ENCODE measurements at regions of chr1 and their contacts with region 1.

Region 1: DNA sequence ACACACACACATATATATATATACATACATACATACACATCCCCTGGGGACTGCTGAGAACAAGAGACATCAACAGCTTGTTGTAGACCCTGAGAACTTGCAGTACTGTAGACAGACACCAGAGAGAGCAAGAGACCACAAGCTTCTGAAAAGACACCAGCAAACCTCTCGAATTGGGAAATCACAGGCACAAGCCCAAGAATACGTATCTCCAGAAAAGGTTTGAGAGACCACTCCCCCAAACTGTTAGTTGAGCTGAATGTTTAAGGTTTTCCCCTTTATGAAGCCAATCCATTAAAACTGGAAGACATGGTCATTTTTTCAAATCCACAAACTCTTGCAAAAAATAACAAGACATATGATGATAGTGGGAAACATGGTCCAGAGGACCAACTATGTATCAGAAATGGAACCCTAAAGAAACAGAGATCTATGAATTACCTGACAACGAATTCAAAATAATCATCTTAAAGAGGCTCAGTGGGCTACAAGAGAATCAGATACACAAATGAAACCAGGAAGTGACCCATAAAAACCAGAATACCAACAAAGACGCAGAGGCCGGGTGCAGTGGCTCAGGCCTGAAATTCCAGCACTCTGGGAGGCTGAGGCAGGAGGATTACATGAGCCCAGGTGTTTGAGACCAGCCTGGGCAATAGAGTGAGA is 45.1 kb downstream of the SLC2A1 start:
- H3K4me3 ChIP-seq: no peak overlapping the region
- H3K27ac ChIP-seq: no peak overlapping the region
- H3K4me1 ChIP-seq: no peaks in the 10 kb centered on the region
- CTCF ChIP-seq: peak; percentile 39; the same call in 1 of the 2 replicates

Region 2: GRCh38 chr1:42380586-42381279 is 532.8 kb before region 1 on chr1 and contains the start of gene RIMKLA:
- CTCF ChIA-PET with region 1: no interaction called
- POLR2A ChIA-PET with region 1: no interaction called
- H3K4me3 ChIP-seq: peak within 1 kb of the TSS; percentile 66
- H3K27ac ChIP-seq: peak within 1 kb of the TSS; percentile 57; the same call in 1 of the 2 replicates
- H3K4me1 ChIP-seq: peaks cover 4% of the 10 kb centered on the region; the same call in 1 of the 2 replicates
- CTCF ChIP-seq: no peak; the same call in 1 of the 2 replicates

Region 3: DNA sequence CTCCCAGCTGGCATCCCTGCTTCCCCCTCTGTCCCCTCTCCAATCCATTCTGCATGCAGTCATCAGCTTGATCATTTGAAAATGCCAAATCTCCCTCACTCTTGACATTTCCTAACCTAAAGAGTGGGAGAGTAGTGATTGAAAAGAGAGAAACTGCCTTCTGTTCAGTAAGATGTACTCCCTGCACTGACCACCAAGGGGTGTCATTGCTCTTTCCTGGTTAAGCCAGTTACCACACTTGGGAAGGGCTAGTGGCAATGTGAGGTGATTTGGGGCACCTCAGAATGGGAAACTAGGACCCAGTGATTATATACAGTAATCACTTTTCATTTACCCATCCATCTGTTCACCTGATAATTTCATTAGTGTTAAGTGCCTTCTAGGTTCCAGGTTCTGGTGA is 135.7 kb before region 1 on chr1:
- CTCF ChIA-PET with region 1: interaction called, 24 read pairs
- POLR2A ChIA-PET with region 1: no interaction called
- H3K4me3 ChIP-seq: no peak overlapping the region
- H3K27ac ChIP-seq: no peak overlapping the region
- H3K4me1 ChIP-seq: no peaks in the 10 kb centered on the region
- CTCF ChIP-seq: peak; percentile 64

Region 4: GRCh38 chr1:42833981-42834380 is 79.6 kb before region 1 on chr1:
- CTCF ChIA-PET with region 1: no interaction called
- POLR2A ChIA-PET with region 1: no interaction called
- H3K4me3 ChIP-seq: no peak overlapping the region
- H3K27ac ChIP-seq: no peak overlapping the region
- H3K4me1 ChIP-seq: peaks cover 3% of the 10 kb centered on the region
- CTCF ChIP-seq: no peak

Measured in HEK293 (cell line).